Pancreas (tissue), 10 donors: ENCODE measurements at regions of chr6 and their contacts with region 1.

Region 1: GRCh38 chr6:41367700-41368099 is 32.3 kb downstream of the NCR2 start:
- DNase-seq: peak in 1 of 6 donors; percentile 41
- ATAC-seq: peak in 3 of 4 donors; percentile 65 to 73 (median 68)
- H3K4me3 ChIP-seq: no peak overlapping the region
- H3K27ac ChIP-seq: no peak overlapping the region
- H3K4me1 ChIP-seq: peaks cover 0 to 6% (median 0%) of the 10 kb centered on the region in 3 donors
- H3K27me3 ChIP-seq: peaks cover 0 to 28% (median 2%) of the 10 kb centered on the region in 4 donors
- CTCF ChIP-seq: peak in 3 of 4 donors; percentile 10 to 28 (median 13)

Region 2: DNA sequence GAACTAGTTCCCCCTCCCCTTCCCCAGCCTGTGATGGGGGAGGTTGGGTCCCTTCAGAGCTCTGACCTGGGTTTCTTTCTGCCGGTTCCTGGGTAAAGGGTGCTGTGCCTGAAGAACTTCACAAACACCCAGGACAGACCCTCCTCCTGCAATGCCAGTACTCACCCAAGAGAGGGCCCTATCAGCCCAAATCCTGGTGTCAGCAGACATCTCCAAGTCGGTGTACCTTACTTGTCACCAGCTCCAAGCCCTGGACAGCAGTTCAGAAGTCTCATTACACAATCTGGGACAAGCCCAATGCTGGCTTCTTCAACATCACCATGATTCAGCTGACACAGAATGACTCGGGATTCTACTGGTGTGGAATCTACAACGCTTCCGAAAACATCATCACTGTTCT is 139.1 kb before region 1 on chr6:
- intact Hi-C with region 1: no loop called
- DNase-seq: no peak
- ATAC-seq: peak in 1 of 4 donors; percentile 22
- H3K4me3 ChIP-seq: no peak overlapping the region
- H3K27ac ChIP-seq: no peak overlapping the region
- H3K4me1 ChIP-seq: no peaks in the 10 kb centered on the region
- H3K27me3 ChIP-seq: peaks cover 0 to 5% (median 0%) of the 10 kb centered on the region in 4 donors
- CTCF ChIP-seq: no peak

Region 3: GRCh38 chr6:41584668-41585205 is 217.0 kb after region 1 on chr6:
- intact Hi-C with region 1: loop called in 1 of 3 experiments (anchors 5 kb)
- DNase-seq: peak in 5 of 6 donors; percentile 70 to 86 (median 75)
- ATAC-seq: peak; percentile 62 to 85 (median 78)
- H3K4me3 ChIP-seq: no peak overlapping the region
- H3K27ac ChIP-seq: peak overlapping the region in 1 of 4 donors; percentile 67
- H3K4me1 ChIP-seq: peaks cover 6 to 28% (median 14%) of the 10 kb centered on the region in 3 donors
- H3K27me3 ChIP-seq: no peaks in the 10 kb centered on the region
- CTCF ChIP-seq: no peak

Region 4: GRCh38 chr6:41591859-41592502 is 224.3 kb after region 1 on chr6:
- intact Hi-C with region 1: loop called in 2 of 3 experiments (anchors 5 kb)
- DNase-seq: peak; percentile 56 to 91 (median 80)
- ATAC-seq: peak; percentile 58 to 85 (median 75)
- H3K4me3 ChIP-seq: no peak overlapping the region
- H3K27ac ChIP-seq: no peak overlapping the region
- H3K4me1 ChIP-seq: no peaks in the 10 kb centered on the region
- H3K27me3 ChIP-seq: no peaks in the 10 kb centered on the region
- CTCF ChIP-seq: peak; percentile 82 to 95 (median 90)

Region 5: GRCh38 chr6:41602864-41603608 is 235.3 kb after region 1 on chr6:
- intact Hi-C with region 1: no loop called
- DNase-seq: peak in 5 of 6 donors; percentile 76 to 85 (median 82)
- ATAC-seq: peak; percentile 78 to 93 (median 88)
- H3K4me3 ChIP-seq: peak overlapping the region in 1 of 4 donors; percentile 9
- H3K27ac ChIP-seq: peak overlapping the region in 1 of 4 donors; percentile 14
- H3K4me1 ChIP-seq: no peaks in the 10 kb centered on the region
- H3K27me3 ChIP-seq: no peaks in the 10 kb centered on the region
- CTCF ChIP-seq: peak; percentile 70 to 87 (median 85)

Region 6: GRCh38 chr6:41683510-41684310 is 316.0 kb after region 1 on chr6:
- intact Hi-C with region 1: loop called in 2 of 3 experiments (anchors 5 kb)
- DNase-seq: peak; percentile 49 to 88 (median 71)
- ATAC-seq: peak; percentile 58 to 84 (median 67)
- H3K4me3 ChIP-seq: peak overlapping the region in 1 of 4 donors; percentile 36
- H3K27ac ChIP-seq: peak overlapping the region in 1 of 4 donors; percentile 70
- H3K4me1 ChIP-seq: peaks cover 0 to 9% (median 6%) of the 10 kb centered on the region in 3 donors
- H3K27me3 ChIP-seq: no peaks in the 10 kb centered on the region
- CTCF ChIP-seq: peak; percentile 66 to 75 (median 72)

Region 7: DNA sequence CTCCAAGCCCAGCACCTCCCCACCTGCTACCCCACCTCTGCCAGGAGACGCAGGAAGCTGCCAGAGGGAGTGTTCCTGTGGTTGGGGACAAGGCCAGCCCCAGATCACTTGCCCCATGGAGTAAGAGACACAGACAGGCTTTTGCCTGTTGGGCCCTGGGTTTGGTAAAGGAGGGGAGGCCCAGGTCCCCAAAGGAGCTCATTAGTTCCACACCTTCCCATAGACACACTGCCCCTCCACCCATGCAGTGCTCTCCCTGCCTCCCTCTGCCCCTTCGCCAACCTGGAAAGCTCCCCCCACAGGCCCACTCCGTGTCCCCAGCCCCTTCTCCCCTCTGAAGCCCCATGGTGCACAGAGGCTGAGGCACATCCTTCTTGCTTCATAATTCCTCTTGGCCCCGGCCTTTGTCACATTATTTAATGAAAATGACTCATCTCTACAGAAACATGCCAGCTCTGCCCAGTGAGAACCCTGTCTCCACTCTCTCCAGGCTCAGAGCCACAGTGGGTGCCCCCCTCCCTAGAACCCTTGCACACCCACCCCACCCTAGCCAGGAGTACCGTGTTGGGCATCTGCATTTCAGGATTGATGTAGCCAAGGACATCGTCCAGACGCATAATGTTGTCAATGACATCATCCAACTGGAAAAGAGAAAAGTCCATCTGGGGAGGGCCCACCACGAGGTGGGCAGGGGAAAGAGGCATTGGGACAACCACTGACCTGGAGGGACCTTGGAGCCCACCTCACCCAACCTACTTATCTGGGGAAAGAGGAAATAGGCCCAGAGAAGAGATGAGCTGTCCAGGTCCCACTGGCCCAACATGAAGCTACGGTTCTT is 321.7 kb after region 1 on chr6:
- intact Hi-C with region 1: loop called in 2 of 3 experiments (anchors 5 kb)
- DNase-seq: peak in 1 of 6 donors; percentile 32
- ATAC-seq: peak in 1 of 4 donors; percentile 19
- H3K4me3 ChIP-seq: no peak overlapping the region
- H3K27ac ChIP-seq: no peak overlapping the region
- H3K4me1 ChIP-seq: peaks cover 0 to 4% (median 0%) of the 10 kb centered on the region in 3 donors
- H3K27me3 ChIP-seq: no peaks in the 10 kb centered on the region
- CTCF ChIP-seq: no peak